Sigmoid colon (tissue), 7 donors: ENCODE measurements at regions of chr7 and their contacts with region 1.

Region 1: DNA sequence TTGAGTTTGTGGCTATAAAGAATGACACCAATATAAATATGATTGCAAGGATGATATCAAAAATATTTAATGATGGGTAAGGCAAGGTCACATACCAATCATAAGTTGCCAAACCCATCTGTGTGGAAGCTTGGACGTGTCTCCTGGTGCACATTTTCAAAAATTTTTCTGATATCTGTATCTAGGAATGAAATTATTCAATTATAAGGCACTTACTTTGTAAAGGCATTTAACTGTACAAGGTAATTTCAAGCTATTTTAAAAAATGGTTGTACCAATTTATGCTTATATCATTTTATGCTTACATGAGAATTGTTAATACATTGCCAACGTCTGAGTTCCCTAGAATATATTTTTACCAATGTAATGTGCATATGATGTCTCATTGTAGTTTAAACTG is 306.4 kb upstream of the CACNA2D1 start:
- DNase-seq: no peak
- H3K4me3 ChIP-seq: no peak overlapping the region
- H3K27ac ChIP-seq: no peak overlapping the region
- H3K4me1 ChIP-seq: no peaks in the 10 kb centered on the region
- H3K27me3 ChIP-seq: no peaks in the 10 kb centered on the region
- CTCF ChIP-seq: no peak
- EP300 ChIP-seq: no peak
- POLR2A ChIP-seq: no peak

Region 2: GRCh38 chr7:82701949-82702348 is 48.1 kb before region 1 on chr7:
- intact Hi-C with region 1: loop called (anchors 2 kb)
- DNase-seq: no peak
- H3K4me3 ChIP-seq: no peak overlapping the region
- H3K27ac ChIP-seq: no peak overlapping the region
- H3K4me1 ChIP-seq: peaks cover 0 to 9% (median 2%) of the 10 kb centered on the region in 4 donors
- H3K27me3 ChIP-seq: no peaks in the 10 kb centered on the region
- CTCF ChIP-seq: no peak
- EP300 ChIP-seq: no peak
- POLR2A ChIP-seq: no peak

Region 3: DNA sequence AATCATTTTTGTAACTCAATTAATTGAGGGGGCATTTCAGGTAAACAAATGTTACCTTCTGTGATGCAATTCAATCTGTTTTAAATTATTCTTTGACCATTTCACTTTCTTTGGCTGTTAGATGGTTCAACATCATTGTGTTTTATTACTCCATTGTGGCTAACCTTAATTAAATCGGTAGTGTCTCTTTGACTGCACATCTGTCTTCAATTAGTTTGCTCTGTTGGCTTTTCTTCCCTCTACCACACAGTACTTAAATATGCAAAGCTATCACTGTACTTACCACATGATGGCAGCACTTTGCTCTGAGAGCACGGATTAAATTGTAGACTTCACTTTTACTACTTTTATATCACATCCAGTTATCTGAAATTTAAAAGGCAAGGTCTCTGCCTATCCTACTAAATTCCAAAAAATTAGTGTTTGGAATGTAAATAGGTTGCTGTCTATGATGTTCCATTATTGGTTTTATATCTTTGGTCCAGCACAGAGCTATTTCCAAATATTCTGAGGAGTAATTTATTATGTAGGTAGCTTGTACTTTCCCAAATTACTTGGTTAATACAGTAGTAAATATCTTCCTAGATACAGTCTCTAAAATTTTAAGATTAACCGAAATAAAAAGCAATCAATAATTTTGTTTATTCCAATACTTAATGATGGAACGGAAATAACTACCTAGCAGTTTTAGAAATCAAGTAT is 60.7 kb after region 1 on chr7:
- intact Hi-C with region 1: no loop called
- DNase-seq: no peak
- H3K4me3 ChIP-seq: no peak overlapping the region
- H3K27ac ChIP-seq: no peak overlapping the region
- H3K4me1 ChIP-seq: no peaks in the 10 kb centered on the region
- H3K27me3 ChIP-seq: no peaks in the 10 kb centered on the region
- CTCF ChIP-seq: peak in 2 of 4 experiments; percentile 18 to 39
- EP300 ChIP-seq: no peak
- POLR2A ChIP-seq: no peak